Activated CD4-positive, alpha-beta T cell treated with anti-CD3 and anti-CD28 coated beads, Interleukin-2, amount 10 ng/mL, durations not matched to agents 24 days and 14 days (primary cell): ENCODE measurements at regions of chr4 and their contacts with region 1.

Region 1: GRCh38 chr4:157978680-157979361 is 194.0 kb downstream of the GASK1B start:
- DNase-seq: peak; percentile 68
- H3K4me3 Mint-ChIP-seq: no peak overlapping the region
- H3K27ac Mint-ChIP-seq: no peak overlapping the region
- H3K4me1 Mint-ChIP-seq: peaks cover 2% of the 10 kb centered on the region
- H3K27me3 Mint-ChIP-seq: peaks cover 4% of the 10 kb centered on the region

Region 2: GRCh38 chr4:156865451-156865850 is 1113.4 kb before region 1 on chr4:
- intact Hi-C with region 1: no loop called
- DNase-seq: no peak
- H3K4me3 Mint-ChIP-seq: no peak overlapping the region
- H3K27ac Mint-ChIP-seq: no peak overlapping the region
- H3K4me1 Mint-ChIP-seq: no peaks in the 10 kb centered on the region
- H3K27me3 Mint-ChIP-seq: no peaks in the 10 kb centered on the region

Region 3: DNA sequence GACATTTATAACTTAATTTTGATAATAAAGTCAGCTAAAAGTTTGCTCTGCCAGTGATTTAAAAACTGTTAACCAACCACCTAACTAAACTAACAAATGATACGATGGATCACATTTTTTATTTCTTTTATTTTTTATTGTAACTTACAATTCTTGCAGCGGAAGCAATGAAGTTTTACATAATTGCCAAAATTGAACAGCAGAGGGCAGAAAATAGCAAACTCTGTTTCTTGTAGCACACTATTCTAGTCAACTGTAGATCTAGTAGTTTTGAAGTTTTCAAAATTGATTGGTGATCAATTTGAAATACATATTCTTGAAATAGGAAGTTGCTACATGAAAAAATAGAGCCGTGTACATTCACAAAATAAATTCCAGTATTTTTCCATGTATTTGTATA is 761.1 kb before region 1 on chr4:
- intact Hi-C with region 1: loop called (anchors 5 kb)
- DNase-seq: no peak
- H3K4me3 Mint-ChIP-seq: no peak overlapping the region
- H3K27ac Mint-ChIP-seq: no peak overlapping the region
- H3K4me1 Mint-ChIP-seq: no peaks in the 10 kb centered on the region
- H3K27me3 Mint-ChIP-seq: peaks cover 17% of the 10 kb centered on the region

Region 4: DNA sequence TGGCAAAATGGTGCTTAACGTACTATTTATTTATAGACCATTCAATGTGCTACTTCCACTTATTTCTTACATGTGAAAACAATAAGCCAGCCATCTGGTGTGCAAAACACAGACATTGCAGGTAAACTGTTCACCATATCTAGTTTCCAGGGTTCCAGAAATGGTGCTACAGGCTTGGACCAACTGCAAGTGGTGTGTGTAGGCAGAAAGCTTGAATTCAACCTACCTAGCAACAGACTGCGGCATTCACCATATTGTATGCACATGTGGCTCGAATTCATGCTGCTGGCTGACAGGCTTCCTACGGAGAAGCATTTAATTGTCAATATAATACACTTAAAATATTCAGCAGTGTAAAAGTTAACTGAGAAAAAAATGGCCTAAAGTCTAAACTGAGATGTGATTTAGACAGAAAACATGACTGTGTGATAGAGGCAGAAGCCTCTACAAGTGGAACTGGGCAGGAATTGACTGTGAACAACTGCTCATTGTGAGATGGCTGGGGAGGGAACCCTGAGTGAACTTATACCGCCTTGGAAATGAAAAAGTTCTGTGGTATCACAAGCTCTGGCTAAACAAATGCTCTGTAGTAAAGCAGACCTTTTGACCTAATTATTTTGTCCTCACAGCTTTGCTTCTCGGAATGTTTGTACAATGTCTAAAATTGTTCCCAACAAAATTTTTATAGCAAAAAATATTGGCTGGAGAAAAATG is 323.6 kb before region 1 on chr4:
- intact Hi-C with region 1: no loop called
- DNase-seq: no peak
- H3K4me3 Mint-ChIP-seq: no peak overlapping the region
- H3K27ac Mint-ChIP-seq: no peak overlapping the region
- H3K4me1 Mint-ChIP-seq: no peaks in the 10 kb centered on the region
- H3K27me3 Mint-ChIP-seq: no peaks in the 10 kb centered on the region

Region 5: DNA sequence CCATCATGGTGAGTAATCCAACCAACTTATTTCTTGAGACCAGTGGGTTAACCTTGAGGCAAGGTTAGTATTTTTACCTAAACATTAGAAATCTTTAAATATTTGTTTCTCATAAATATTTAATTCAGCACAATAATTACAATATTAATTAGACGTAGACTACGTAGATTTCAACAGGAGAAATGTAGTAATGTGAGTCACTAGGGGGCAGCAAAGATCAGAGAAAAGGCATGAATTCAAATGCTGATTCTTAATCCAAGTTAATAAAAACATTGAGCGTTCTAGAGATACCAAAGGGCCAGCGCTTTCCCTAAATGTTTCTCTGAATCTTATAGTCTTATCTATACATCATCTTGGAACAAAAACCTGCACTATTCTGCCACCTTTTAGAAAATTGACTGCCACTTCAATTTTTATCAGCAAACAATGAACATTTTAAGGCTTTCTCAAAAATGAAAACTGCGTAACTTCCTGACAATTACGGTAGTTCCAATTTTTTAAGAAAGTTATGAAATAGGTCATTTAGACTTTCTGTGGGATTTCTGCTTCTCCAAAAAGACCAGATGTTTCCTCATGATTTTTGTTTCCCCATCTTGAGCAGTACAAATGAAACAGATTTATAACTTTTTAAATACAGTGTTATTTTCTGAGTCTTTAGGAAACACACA is 13.4 kb after region 1 on chr4:
- intact Hi-C with region 1: no loop called
- DNase-seq: peak; percentile 70
- H3K4me3 Mint-ChIP-seq: no peak overlapping the region
- H3K27ac Mint-ChIP-seq: no peak overlapping the region
- H3K4me1 Mint-ChIP-seq: no peaks in the 10 kb centered on the region
- H3K27me3 Mint-ChIP-seq: no peaks in the 10 kb centered on the region